ENCODE measurements at regions of chr2 and their contacts with region 1.

Region 1: GRCh38 chr2:215311625-215312396 is at the start of gene ATIC:
- DNase-seq: peak; percentile 69 to 96
- ATAC-seq: peak; percentile 99
- H3K4me3 ChIP-seq: peak within 1 kb of the TSS; percentile 81
- H3K27ac ChIP-seq: peak within 1 kb of the TSS; percentile 98 to 99
- H3K4me1 ChIP-seq: peaks cover 19% of the 10 kb centered on the region
- CTCF ChIP-seq: no peak
- EP300 ChIP-seq: no peak; a peak in 1 of 5 replicates
- POLR2A ChIP-seq: peak; percentile 82
- RAD21 ChIP-seq: no peak; a peak in 1 of 5 replicates
- polyA plus RNA-seq, gene ATIC: 328 and 353 TPM in 2 replicates

Region 2: GRCh38 chr2:215299337-215299859 is 12.4 kb before region 1 on chr2:
- CTCF ChIA-PET with region 1: no interaction called
- POLR2A ChIA-PET with region 1: interaction called, 14 read pairs
- DNase-seq: no peak
- ATAC-seq: no peak
- H3K4me3 ChIP-seq: no peak overlapping the region
- H3K27ac ChIP-seq: no peak overlapping the region
- H3K4me1 ChIP-seq: peaks cover 13% of the 10 kb centered on the region
- CTCF ChIP-seq: no peak
- EP300 ChIP-seq: no peak
- POLR2A ChIP-seq: no peak
- RAD21 ChIP-seq: no peak

Region 3: GRCh38 chr2:215380699-215381098 is 68.9 kb after region 1 on chr2:
- CTCF ChIA-PET with region 1: interaction called, 3 read pairs
- POLR2A ChIA-PET with region 1: interaction called, 10 read pairs
- DNase-seq: no peak
- ATAC-seq: no peak; a peak in 1 of 6 replicates
- H3K4me3 ChIP-seq: no peak overlapping the region
- H3K27ac ChIP-seq: no peak overlapping the region
- H3K4me1 ChIP-seq: no peaks in the 10 kb centered on the region
- CTCF ChIP-seq: no peak
- EP300 ChIP-seq: no peak
- POLR2A ChIP-seq: no peak
- RAD21 ChIP-seq: no peak

Measured in A549 (cell line).